Activated B cell treated with CpG ODN at 0.5 μM for 24 hours (primary cell): ENCODE measurements at regions of chrX and their contacts with region 1.

Region 1: GRCh38 chrX:43557792-43558191 is 98.3 kb upstream of the MAOA start:
- DNase-seq: peak; percentile 18
- ATAC-seq: peak; percentile 42
- H3K4me3 Mint-ChIP-seq: no peak overlapping the region
- H3K27ac Mint-ChIP-seq: no peak overlapping the region
- H3K4me1 Mint-ChIP-seq: peaks cover 13% of the 10 kb centered on the region
- H3K27me3 Mint-ChIP-seq: no peaks in the 10 kb centered on the region
- CTCF ChIP-seq: no peak

Region 2: DNA sequence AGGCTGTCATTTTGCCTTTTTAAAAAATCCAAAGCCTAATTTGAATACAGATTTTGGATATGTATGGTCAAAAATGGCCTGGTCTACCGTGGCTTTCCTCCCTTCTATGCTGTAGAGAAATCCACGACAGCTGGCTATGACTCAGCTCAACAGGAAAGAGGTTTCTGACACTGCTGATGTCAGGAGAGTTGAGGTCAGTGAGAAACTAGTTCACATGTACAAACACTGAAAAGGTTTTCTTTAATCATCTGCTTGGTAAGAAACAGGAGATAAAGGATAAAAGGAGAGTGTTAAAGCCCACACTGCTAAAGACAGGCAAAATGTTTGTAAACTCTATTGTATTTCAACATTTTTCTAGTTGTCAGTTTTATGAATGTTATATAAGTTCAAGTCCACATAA is 1996.7 kb before region 1 on chrX:
- CTCF ChIA-PET with region 1: no interaction called
- POLR2A ChIA-PET with region 1: no interaction called
- intact Hi-C with region 1: loop called (anchors 2 kb)
- DNase-seq: no peak
- ATAC-seq: peak; percentile 57
- H3K4me3 Mint-ChIP-seq: no peak overlapping the region
- H3K27ac Mint-ChIP-seq: no peak overlapping the region
- H3K4me1 Mint-ChIP-seq: peaks cover 20% of the 10 kb centered on the region
- H3K27me3 Mint-ChIP-seq: no peaks in the 10 kb centered on the region
- CTCF ChIP-seq: no peak

Region 3: GRCh38 chrX:41796577-41796976 is 1761.2 kb before region 1 on chrX:
- CTCF ChIA-PET with region 1: interaction called, 35 read pairs
- POLR2A ChIA-PET with region 1: no interaction called
- intact Hi-C with region 1: loop called (anchors 1 kb)
- DNase-seq: no peak
- ATAC-seq: no peak
- H3K4me3 Mint-ChIP-seq: no peak overlapping the region
- H3K27ac Mint-ChIP-seq: no peak overlapping the region
- H3K4me1 Mint-ChIP-seq: peaks cover 32% of the 10 kb centered on the region
- H3K27me3 Mint-ChIP-seq: no peaks in the 10 kb centered on the region
- CTCF ChIP-seq: no peak

Region 4: DNA sequence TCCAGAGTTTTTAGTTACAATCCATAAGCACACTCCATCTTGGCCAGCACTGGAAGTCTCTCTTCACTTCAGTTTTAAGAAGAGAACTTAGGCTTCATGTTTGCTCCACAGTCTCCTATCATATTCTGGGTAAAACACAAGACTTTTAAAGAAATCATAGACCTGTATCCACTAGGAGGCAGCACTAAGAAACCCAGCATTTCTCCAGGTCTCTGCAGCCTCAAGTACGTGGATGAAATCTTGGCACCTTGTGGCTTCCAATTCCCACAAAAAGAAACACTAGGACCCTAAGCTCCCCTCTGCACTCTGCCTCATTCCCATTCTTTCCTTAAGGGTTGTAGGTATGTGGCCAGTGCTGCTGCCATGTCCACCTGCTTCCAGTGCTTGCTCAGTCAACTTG is 1267.2 kb before region 1 on chrX:
- CTCF ChIA-PET with region 1: no interaction called
- POLR2A ChIA-PET with region 1: no interaction called
- intact Hi-C with region 1: loop called (anchors 5 kb)
- DNase-seq: no peak
- ATAC-seq: no peak
- H3K4me3 Mint-ChIP-seq: no peak overlapping the region
- H3K27ac Mint-ChIP-seq: no peak overlapping the region
- H3K4me1 Mint-ChIP-seq: peaks cover 2% of the 10 kb centered on the region
- H3K27me3 Mint-ChIP-seq: no peaks in the 10 kb centered on the region
- CTCF ChIP-seq: no peak

Region 5: DNA sequence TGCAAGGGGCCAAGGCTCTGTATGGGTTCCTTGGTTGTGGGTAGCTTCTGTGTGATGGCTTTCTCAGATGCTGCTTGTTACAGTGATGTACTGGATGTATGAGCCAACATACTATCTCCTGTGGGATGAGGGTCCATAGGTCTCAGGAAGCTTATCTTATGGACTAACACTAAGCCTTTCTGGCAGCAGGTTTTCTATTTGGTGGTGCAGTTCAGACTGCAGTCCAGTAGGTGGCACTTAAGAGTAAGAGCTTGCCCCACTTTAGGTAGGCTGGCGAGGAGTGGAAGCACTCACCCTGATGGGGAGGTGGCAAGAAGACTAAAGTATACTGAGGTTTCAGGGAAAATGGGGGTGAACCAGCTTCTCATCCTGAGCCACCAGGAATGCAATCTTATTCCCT is 208.4 kb before region 1 on chrX:
- CTCF ChIA-PET with region 1: no interaction called
- POLR2A ChIA-PET with region 1: no interaction called
- intact Hi-C with region 1: loop called (anchors 5 kb)
- DNase-seq: no peak
- ATAC-seq: no peak
- H3K4me3 Mint-ChIP-seq: no peak overlapping the region
- H3K27ac Mint-ChIP-seq: no peak overlapping the region
- H3K4me1 Mint-ChIP-seq: peaks cover 35% of the 10 kb centered on the region
- H3K27me3 Mint-ChIP-seq: no peaks in the 10 kb centered on the region
- CTCF ChIP-seq: no peak

Region 6: GRCh38 chrX:43540318-43540717 is 17.5 kb before region 1 on chrX:
- CTCF ChIA-PET with region 1: no interaction called
- POLR2A ChIA-PET with region 1: no interaction called
- intact Hi-C with region 1: no loop called
- DNase-seq: no peak
- ATAC-seq: no peak
- H3K4me3 Mint-ChIP-seq: no peak overlapping the region
- H3K27ac Mint-ChIP-seq: no peak overlapping the region
- H3K4me1 Mint-ChIP-seq: peaks cover 6% of the 10 kb centered on the region
- H3K27me3 Mint-ChIP-seq: no peaks in the 10 kb centered on the region
- CTCF ChIP-seq: no peak

Region 7: DNA sequence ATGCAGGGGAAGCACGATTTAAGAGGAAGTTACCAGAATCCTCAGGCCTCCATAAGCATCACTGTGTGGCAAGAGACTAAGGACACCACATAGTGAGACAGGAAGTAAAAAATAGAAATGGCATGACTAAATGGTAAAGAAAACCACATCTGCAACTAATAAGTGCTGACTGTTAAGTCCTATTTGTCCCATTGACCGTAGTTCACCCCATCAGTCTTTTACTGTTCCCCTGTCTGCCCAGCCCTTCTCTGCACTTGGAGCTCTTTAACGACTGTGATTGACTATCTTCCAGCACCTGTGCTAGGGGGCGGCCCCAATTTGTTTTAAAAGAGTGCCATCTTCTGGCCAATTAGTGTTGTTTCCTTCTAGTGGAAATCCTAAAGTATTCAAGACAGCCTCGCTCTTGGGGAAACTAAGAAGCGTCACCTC is 192.5 kb after region 1 on chrX:
- CTCF ChIA-PET with region 1: interaction called, 6 read pairs
- POLR2A ChIA-PET with region 1: no interaction called
- intact Hi-C with region 1: loop called (anchors 1 kb)
- DNase-seq: peak; percentile 12
- ATAC-seq: peak; percentile 74
- H3K4me3 Mint-ChIP-seq: no peak overlapping the region
- H3K27ac Mint-ChIP-seq: no peak overlapping the region
- H3K4me1 Mint-ChIP-seq: peaks cover 3% of the 10 kb centered on the region
- H3K27me3 Mint-ChIP-seq: no peaks in the 10 kb centered on the region
- CTCF ChIP-seq: no peak